MCF 10A (cell line): ENCODE measurements at regions of chr1 and their contacts with region 1.

Region 1: DNA sequence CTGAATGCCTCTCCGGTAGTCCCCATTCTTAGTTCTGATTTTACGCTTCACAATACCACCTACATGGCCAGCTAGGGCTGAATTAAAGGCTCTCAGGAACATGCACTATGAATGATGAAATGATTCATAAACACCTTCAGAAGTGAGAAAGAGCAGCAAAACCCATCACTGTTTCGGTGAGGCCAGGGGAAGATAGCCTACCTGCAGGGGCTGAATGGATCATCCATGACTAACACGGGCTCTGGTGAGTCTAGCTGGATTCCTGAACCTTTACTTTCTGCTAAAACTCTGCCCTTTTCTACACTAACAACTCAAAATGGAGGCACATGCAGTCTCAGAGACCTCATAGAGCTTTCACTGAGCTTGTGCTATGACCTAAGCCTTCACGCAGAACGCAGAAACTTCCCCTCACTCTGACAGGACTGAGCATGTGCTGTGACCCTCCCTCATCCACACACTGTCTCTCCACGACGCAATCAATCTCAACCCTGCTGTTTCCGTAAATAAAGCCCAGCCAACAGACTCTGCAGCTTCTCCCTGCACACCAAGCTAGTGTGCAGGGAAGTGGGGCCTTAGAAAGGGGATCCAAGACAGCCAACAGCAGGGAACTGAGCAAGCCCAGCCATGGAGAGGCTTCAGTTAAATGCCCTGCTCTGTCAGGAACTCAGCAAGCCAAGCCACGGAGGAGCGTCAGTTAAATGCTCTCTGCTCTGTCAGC is 207.8 kb downstream of the SLC45A1 start:
- DNase-seq: peak; percentile 91
- H3K4me3 Mint-ChIP-seq: no peak overlapping the region
- H3K27ac Mint-ChIP-seq: no peak overlapping the region
- H3K4me1 Mint-ChIP-seq: peaks cover 23% of the 10 kb centered on the region
- H3K27me3 Mint-ChIP-seq: no peaks in the 10 kb centered on the region
- CTCF ChIP-seq: no peak

Region 2: GRCh38 chr1:7680207-7680954 is 845.3 kb before region 1 on chr1:
- CTCF ChIA-PET with region 1: no interaction called
- POLR2A ChIA-PET with region 1: no interaction called
- intact Hi-C with region 1: no loop called
- DNase-seq: no peak
- H3K4me3 Mint-ChIP-seq: peak overlapping the region; percentile 61
- H3K27ac Mint-ChIP-seq: no peak overlapping the region
- H3K4me1 Mint-ChIP-seq: no peaks in the 10 kb centered on the region
- H3K27me3 Mint-ChIP-seq: peaks cover 17% of the 10 kb centered on the region
- CTCF ChIP-seq: no peak

Region 3: GRCh38 chr1:8423650-8424538 is 101.8 kb before region 1 on chr1:
- CTCF ChIA-PET with region 1: no interaction called
- POLR2A ChIA-PET with region 1: interaction called, 10 read pairs
- intact Hi-C with region 1: no loop called
- DNase-seq: peak; percentile 45
- H3K4me3 Mint-ChIP-seq: no peak overlapping the region
- H3K27ac Mint-ChIP-seq: peak overlapping the region; percentile 52
- H3K4me1 Mint-ChIP-seq: peaks cover 6% of the 10 kb centered on the region
- H3K27me3 Mint-ChIP-seq: no peaks in the 10 kb centered on the region
- CTCF ChIP-seq: no peak

Region 4: DNA sequence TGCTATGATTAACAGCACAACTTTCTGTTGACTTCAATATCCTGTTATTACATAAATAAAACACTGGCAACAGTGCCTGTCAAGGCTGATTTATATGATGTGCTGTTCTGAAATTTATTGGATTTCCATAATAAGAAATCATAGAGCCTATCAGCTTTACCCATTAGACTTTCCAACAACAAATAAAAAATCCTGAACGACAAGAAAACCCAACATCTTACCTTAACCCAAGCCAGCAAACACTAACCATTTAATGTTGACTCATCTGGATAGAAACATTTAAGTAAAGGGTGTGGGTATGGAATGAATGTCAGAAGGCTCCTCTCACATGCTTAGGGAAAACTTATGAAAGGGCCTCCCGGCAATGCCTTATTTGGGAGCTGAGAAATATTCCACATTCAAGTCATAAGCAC is 42.7 kb before region 1 on chr1:
- CTCF ChIA-PET with region 1: no interaction called
- POLR2A ChIA-PET with region 1: interaction called, 10 read pairs
- intact Hi-C with region 1: no loop called
- DNase-seq: peak; percentile 48
- H3K4me3 Mint-ChIP-seq: no peak overlapping the region
- H3K27ac Mint-ChIP-seq: peak overlapping the region; percentile 84
- H3K4me1 Mint-ChIP-seq: peaks cover 5% of the 10 kb centered on the region
- H3K27me3 Mint-ChIP-seq: no peaks in the 10 kb centered on the region
- CTCF ChIP-seq: no peak

Region 5: DNA sequence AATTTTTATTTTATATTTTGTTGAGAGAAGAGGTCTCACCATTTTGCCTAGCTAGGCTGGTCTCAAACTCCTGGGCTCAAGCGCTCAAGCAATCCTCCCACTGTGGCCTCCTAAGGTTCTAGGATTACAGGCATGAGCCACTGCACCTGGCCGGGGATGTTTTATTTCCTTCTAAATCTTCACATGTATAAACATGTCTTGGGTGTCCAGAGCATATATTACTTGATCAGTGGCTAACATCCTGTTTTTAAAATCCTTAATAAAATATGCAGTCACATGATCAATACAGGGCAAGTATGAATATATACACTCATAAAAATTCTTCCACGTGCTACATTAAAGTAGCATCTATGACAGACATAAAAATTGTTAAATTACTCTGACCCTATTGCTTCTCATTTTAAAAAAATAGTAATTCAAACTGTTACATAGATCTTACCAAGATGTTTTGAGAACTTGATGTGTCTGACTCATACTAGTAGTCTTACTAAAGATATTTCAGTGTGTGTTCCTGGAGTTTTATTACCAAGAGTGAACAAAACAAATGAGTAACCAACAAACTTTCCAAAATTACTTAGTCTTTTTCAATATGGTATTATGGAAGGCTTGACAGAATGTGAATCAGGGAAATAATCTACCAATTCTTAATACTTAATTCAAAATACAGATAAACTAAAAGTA is 14.7 kb after region 1 on chr1:
- CTCF ChIA-PET with region 1: interaction called, 3 read pairs
- POLR2A ChIA-PET with region 1: interaction called, 54 read pairs
- intact Hi-C with region 1: no loop called
- DNase-seq: peak; percentile 64
- H3K4me3 Mint-ChIP-seq: peak overlapping the region; percentile 51
- H3K27ac Mint-ChIP-seq: peak overlapping the region; percentile 99
- H3K4me1 Mint-ChIP-seq: peaks cover 20% of the 10 kb centered on the region
- H3K27me3 Mint-ChIP-seq: no peaks in the 10 kb centered on the region
- CTCF ChIP-seq: no peak

Region 6: DNA sequence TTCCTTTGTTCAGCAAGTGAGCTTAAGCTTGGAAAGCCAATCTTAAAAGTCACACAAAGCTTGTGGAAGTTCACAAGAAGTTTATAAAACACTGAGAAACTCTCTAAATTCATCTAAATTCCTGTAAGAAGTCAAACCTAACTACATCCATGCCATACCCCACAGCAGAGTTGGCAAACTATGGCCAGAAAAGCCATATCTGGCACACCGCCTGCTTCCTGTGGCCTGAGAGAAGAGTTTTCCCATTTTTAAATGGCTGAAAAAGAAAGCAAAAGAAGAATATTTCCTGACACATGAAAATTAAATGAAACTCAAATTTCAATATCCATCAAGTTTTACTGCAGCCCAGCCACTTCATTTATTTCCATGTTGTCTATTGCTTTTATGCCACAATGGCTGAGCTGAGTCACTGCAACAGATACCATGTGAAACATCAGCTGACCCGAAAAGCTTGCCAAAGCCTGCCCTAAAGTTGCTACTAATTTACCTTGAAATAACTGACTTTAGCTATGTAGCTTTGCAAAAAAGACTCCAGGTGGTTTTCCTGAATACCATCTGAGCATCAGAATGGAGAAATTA is 29.3 kb after region 1 on chr1:
- CTCF ChIA-PET with region 1: interaction called, 3 read pairs
- POLR2A ChIA-PET with region 1: interaction called, 15 read pairs
- intact Hi-C with region 1: no loop called
- DNase-seq: peak; percentile 62
- H3K4me3 Mint-ChIP-seq: no peak overlapping the region
- H3K27ac Mint-ChIP-seq: peak overlapping the region; percentile 61
- H3K4me1 Mint-ChIP-seq: no peaks in the 10 kb centered on the region
- H3K27me3 Mint-ChIP-seq: no peaks in the 10 kb centered on the region
- CTCF ChIP-seq: no peak

Region 7: DNA sequence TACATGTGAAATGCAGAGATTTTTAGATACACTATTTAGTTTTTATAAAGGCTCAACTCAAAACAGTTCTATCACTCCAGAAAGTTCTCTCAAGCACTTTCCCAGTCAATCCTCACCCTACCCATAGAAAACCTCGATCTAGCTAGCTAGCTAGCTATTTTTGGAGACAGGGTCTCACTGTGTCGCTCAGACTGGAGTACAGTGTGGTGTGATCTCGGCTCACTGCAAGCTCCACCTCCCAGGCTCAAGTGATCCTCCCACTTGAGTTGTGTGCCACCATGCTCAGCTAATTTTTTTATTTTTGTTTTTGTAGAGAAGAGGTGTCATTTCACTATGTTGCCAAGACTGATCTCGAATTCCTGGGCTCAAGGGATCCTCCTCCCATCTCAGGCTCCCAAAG is 54.8 kb after region 1 on chr1:
- CTCF ChIA-PET with region 1: no interaction called
- POLR2A ChIA-PET with region 1: no interaction called
- intact Hi-C with region 1: no loop called
- DNase-seq: no peak
- H3K4me3 Mint-ChIP-seq: no peak overlapping the region
- H3K27ac Mint-ChIP-seq: no peak overlapping the region
- H3K4me1 Mint-ChIP-seq: no peaks in the 10 kb centered on the region
- H3K27me3 Mint-ChIP-seq: no peaks in the 10 kb centered on the region
- CTCF ChIP-seq: no peak

Region 8: GRCh38 chr1:8671306-8671917 is 145.7 kb after region 1 on chr1:
- CTCF ChIA-PET with region 1: no interaction called
- POLR2A ChIA-PET with region 1: interaction called, 20 read pairs
- intact Hi-C with region 1: no loop called
- DNase-seq: peak; percentile 76
- H3K4me3 Mint-ChIP-seq: no peak overlapping the region
- H3K27ac Mint-ChIP-seq: peak overlapping the region; percentile 80
- H3K4me1 Mint-ChIP-seq: peaks cover 44% of the 10 kb centered on the region
- H3K27me3 Mint-ChIP-seq: no peaks in the 10 kb centered on the region
- CTCF ChIP-seq: peak; percentile 81

Region 9: DNA sequence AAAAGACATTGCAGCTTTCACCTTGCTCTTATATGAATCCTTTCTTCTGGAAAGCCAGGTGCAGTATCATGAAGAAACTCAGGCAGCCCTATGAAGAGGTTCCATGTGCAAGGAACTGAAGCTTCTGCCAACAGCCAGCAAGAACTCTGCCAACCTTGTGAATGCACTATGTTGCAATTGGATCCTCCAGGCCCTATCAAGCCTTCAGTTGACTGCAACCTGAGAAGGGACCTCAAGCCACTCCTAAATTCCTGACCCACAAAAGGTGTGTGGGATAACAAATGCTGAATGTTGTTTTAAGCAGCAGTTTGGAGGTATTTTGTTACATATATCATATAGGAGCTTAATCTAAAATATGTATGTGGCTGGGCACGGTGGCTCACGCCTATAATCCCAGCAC is 207.7 kb after region 1 on chr1:
- CTCF ChIA-PET with region 1: no interaction called
- POLR2A ChIA-PET with region 1: interaction called, 10 read pairs
- intact Hi-C with region 1: no loop called
- DNase-seq: peak; percentile 96
- H3K4me3 Mint-ChIP-seq: no peak overlapping the region
- H3K27ac Mint-ChIP-seq: no peak overlapping the region
- H3K4me1 Mint-ChIP-seq: peaks cover 6% of the 10 kb centered on the region
- H3K27me3 Mint-ChIP-seq: no peaks in the 10 kb centered on the region
- CTCF ChIP-seq: no peak